ENCODE measurements at regions of chr12 and their contacts with region 1.

Region 1: GRCh38 chr12:56769868-56770267 is 6.7 kb downstream of the HSD17B6 start:
- DNase-seq: no peak
- H3K4me3 ChIP-seq: no peak overlapping the region
- CTCF ChIP-seq: no peak

Region 2: DNA sequence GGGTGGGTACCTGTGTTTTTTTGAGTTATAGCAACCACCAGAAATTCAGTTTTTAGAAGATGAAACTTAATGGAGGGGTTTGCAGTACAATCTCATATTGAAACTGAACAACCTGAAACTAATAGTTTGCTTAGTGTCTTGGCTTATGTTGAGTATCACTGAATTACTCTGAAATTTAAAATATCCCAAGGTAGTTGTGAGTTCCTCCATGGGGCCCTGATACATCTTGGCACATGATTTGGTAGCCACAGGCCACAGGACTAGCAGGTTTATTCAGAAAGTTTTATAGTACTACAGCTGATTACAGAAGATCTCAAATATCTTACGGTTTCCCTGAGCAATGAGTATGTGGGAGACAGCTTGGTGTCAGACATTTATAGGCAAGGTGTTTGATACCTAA is 92.2 kb before region 1 on chr12:
- in situ Hi-C with region 1: no loop called
- DNase-seq: no peak
- H3K4me3 ChIP-seq: no peak overlapping the region
- CTCF ChIP-seq: no peak

Region 3: DNA sequence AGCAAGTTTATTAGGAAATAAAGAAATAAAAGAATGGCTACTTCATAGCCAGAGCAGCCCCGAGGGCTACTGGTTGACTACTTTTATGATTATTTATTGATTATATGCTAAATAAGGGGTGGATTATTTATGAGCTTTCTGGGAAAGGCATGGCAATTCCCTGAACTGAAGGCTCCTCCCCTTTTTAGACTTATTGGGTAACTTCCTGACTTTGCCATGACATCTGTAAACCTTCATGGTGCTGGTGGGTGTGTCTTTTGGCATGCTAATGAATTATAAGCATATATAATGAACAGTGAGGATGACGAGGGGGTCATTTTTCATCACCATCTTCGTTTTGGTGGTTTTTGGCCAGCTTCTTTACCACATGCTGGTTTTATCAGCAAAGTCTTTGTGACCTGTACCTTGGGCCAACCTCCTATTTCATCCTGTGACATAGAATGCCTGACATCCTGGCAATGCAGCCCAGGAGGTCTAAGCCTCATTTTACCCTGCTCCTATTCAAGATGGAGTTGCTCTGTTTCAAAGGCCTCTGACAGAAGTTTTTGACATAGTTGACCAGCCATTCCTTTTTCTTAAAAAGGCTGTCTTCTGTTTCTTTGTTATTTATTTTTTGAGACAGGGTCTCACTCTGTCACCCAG is 70.7 kb before region 1 on chr12:
- in situ Hi-C with region 1: no loop called
- DNase-seq: no peak
- H3K4me3 ChIP-seq: no peak overlapping the region
- CTCF ChIP-seq: no peak

Region 4: DNA sequence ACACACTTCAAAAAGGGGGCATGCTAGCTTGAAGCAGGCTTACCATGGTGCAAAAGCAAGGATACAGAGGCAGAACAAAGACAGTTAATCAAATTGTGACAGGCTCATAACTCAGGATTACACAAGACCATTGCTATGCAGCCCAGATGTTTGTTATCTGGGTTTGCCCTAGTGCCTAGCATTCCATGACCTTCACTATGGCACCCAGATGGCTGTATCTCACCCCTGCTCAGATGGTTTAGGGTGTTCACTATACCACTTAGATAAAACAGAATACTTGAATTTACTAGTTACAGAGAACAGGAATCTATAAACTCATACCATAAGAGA is 108.1 kb after region 1 on chr12:
- in situ Hi-C with region 1: loop called (anchors 5 kb)
- DNase-seq: no peak
- H3K4me3 ChIP-seq: no peak overlapping the region
- CTCF ChIP-seq: no peak

Measured in astrocyte of the cerebellum (primary cell).